Naive thymus-derived CD4-positive, alpha-beta T cell (primary cell): ENCODE measurements at regions of chr11 and their contacts with region 1.

Region 1: DNA sequence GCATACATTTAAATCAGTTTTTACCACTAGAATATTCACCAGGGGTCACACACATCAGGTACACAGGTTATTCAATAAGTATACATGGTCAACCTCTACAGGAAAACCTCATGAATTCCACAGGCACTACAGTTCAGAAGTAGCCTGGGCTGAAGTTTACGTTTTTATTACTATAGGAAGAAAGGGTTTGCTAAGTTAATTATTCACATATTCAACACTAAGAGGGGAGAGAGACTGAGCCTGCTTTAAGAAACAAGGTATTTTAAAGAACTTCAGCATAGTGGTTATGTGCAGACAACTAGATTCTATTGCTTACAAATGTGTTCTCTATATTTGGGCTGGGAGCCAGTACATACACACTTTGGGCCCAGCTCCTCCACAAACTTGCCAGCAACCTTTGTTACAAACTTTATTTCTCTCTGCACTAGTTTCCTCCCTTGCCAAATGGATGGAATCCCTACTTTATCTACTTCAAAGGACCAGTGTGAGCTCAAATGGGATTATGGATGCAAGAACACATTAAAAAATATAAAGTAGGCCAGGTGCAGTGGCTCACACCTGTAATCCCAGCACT is 31.9 kb downstream of the IL18BP start:
- DNase-seq: no peak
- ATAC-seq: no peak
- H3K4me3 ChIP-seq: no peak overlapping the region
- H3K4me3 Mint-ChIP-seq: peak overlapping the region in 8 of 10 donors; percentile 18 to 57 (median 34)
- H3K27ac ChIP-seq: peak overlapping the region; percentile 65
- H3K27ac Mint-ChIP-seq: peak overlapping the region in 8 of 9 donors; percentile 45 to 92 (median 70)
- H3K4me1 ChIP-seq: peaks cover 9 to 28% of the 10 kb centered on the region in 2 donors
- H3K4me1 Mint-ChIP-seq: peaks cover 25 to 80% (median 72%) of the 10 kb centered on the region in 7 donors
- H3K27me3 ChIP-seq: no peaks in the 10 kb centered on the region
- H3K27me3 Mint-ChIP-seq: no peaks in the 10 kb centered on the region

Region 2: GRCh38 chr11:71977743-71978418 is 52.7 kb before region 1 on chr11:
- CTCF ChIA-PET with region 1: interaction called, 3 read pairs
- POLR2A ChIA-PET with region 1: no interaction called
- intact Hi-C with region 1: loop called in 1 of 2 experiments (anchors 5 kb)
- DNase-seq: peak in 6 of 9 donors; percentile 44 to 55 (median 47)
- ATAC-seq: peak; percentile 74
- H3K4me3 ChIP-seq: no peak overlapping the region
- H3K4me3 Mint-ChIP-seq: no peak overlapping the region
- H3K27ac ChIP-seq: no peak overlapping the region
- H3K27ac Mint-ChIP-seq: no peak overlapping the region
- H3K4me1 ChIP-seq: no peaks in the 10 kb centered on the region
- H3K4me1 Mint-ChIP-seq: peaks cover 0 to 7% (median 0%) of the 10 kb centered on the region in 7 donors
- H3K27me3 ChIP-seq: no peaks in the 10 kb centered on the region
- H3K27me3 Mint-ChIP-seq: no peaks in the 10 kb centered on the region

Region 3: DNA sequence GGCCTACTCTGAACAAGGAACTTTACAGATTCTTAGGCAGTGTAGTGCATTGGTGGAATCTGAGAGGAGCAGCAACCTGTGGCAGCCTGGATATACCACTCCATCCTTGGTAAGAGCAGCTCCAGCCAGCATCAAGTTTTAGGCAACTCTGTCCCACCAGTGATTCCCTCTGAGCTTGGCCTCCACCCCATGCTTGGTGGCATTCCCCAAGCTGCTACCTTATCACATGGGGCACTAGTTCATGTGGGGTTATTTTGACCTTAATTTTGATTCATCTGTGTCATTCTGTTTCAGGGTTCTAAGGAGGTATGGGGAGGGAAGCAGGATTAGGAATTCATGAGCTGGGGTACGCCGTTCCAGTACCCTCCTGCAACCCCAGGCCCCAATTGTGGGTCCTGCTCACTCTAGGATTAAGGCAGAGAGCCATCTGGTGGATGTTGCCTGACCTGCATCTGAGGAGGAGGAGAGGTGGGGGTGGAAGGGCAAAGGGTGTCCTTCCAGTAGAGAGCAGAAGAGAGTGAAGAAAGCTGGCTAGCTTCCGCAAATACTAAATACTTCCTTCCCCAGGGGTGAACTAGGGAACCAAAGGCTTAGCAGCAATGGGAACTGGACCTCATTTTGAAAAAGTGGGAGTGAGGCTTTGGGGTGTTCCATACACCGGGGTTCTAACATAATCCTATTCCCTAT is 60.6 kb after region 1 on chr11:
- CTCF ChIA-PET with region 1: interaction called, 143 read pairs
- POLR2A ChIA-PET with region 1: interaction called, 13 read pairs
- intact Hi-C with region 1: loop called (anchors 1 kb)
- DNase-seq: peak; percentile 50 to 79 (median 74)
- ATAC-seq: peak; percentile 99
- H3K4me3 ChIP-seq: no peak overlapping the region
- H3K4me3 Mint-ChIP-seq: no peak overlapping the region
- H3K27ac ChIP-seq: peak overlapping the region; percentile 14
- H3K27ac Mint-ChIP-seq: peak overlapping the region in 8 of 9 donors; percentile 18 to 90 (median 64)
- H3K4me1 ChIP-seq: peaks cover 0 to 3% of the 10 kb centered on the region in 2 donors
- H3K4me1 Mint-ChIP-seq: peaks cover 11 to 18% (median 13%) of the 10 kb centered on the region in 7 donors
- H3K27me3 ChIP-seq: no peaks in the 10 kb centered on the region
- H3K27me3 Mint-ChIP-seq: no peaks in the 10 kb centered on the region

Region 4: DNA sequence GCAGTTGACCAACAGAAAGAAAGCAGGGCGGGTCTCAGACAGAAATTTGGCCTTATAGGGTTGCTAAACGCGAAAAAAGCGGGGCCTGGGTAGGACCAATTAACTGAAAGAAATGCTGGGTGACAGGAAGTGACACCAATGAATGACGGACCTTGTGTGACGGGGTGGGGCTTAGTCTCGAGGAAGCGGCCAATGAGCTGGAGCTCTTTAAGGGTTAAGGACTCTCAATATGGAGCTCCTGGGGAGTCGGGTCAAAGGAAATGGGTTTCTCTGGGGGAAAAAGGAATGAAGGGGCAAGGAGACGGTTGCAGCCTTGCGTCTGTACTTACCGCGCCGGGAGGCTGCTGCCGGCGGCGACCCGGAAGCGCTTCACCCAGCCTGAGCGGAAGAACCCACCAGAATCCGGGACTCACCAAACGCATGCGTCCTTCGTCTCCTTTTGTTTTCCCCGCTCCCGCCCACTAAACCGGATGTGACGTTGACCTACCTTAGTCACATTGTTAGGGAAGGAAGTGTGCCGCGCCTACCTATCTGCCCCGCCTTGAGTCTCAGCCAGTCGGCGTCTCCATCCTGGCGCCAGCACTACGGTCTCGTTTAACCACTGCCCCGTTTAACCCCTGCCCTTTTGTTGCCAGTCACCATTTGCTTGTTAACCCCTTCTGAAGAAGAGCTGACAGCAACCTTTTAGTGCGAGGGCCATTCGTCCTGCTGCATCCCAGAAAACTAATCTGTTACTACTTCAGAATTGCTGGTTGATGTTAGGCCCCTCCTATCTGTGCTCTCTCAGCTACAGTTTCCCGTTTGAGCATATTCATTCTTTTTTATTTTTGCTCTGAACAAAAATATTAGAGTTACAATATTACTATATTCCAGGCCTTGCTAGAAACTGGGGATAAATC is 82.0 kb after region 1 on chr11 and contains the start of gene ANAPC15:
- CTCF ChIA-PET with region 1: interaction called, 3 read pairs
- POLR2A ChIA-PET with region 1: interaction called, 4 read pairs
- intact Hi-C with region 1: loop called in 1 of 2 experiments (anchors 1 kb)
- DNase-seq: peak; percentile 83 to 100 (median 99)
- ATAC-seq: peak; percentile 91
- H3K4me3 ChIP-seq: peak within 1 kb of the TSS; percentile 85
- H3K4me3 Mint-ChIP-seq: peak within 1 kb of the TSS; percentile 73 to 100 (median 96)
- H3K27ac ChIP-seq: peak within 1 kb of the TSS; percentile 92
- H3K27ac Mint-ChIP-seq: peak within 1 kb of the TSS; percentile 97 to 100 (median 98)
- H3K4me1 ChIP-seq: peaks cover 12 to 14% of the 10 kb centered on the region in 2 donors
- H3K4me1 Mint-ChIP-seq: peaks cover 12 to 29% (median 25%) of the 10 kb centered on the region in 7 donors
- H3K27me3 ChIP-seq: no peaks in the 10 kb centered on the region
- H3K27me3 Mint-ChIP-seq: peaks cover 0 to 6% (median 0%) of the 10 kb centered on the region in 5 donors
- total RNA-seq, gene ANAPC15: 43.0 to 59.6 (median 44.1) TPM

Region 5: GRCh38 chr11:72179804-72180396 is 149.3 kb after region 1 on chr11:
- CTCF ChIA-PET with region 1: interaction called, 3 read pairs
- POLR2A ChIA-PET with region 1: no interaction called
- intact Hi-C with region 1: loop called (anchors 1 kb)
- DNase-seq: no peak
- ATAC-seq: no peak
- H3K4me3 ChIP-seq: no peak overlapping the region
- H3K4me3 Mint-ChIP-seq: no peak overlapping the region
- H3K27ac ChIP-seq: no peak overlapping the region
- H3K27ac Mint-ChIP-seq: no peak overlapping the region
- H3K4me1 ChIP-seq: no peaks in the 10 kb centered on the region
- H3K4me1 Mint-ChIP-seq: peaks cover 0 to 5% (median 3%) of the 10 kb centered on the region in 7 donors
- H3K27me3 ChIP-seq: no peaks in the 10 kb centered on the region
- H3K27me3 Mint-ChIP-seq: peaks cover 6 to 24% (median 10%) of the 10 kb centered on the region in 5 donors

Region 6: GRCh38 chr11:72250661-72251465 is 220.3 kb after region 1 on chr11:
- CTCF ChIA-PET with region 1: no interaction called
- POLR2A ChIA-PET with region 1: no interaction called
- intact Hi-C with region 1: no loop called
- DNase-seq: no peak
- ATAC-seq: no peak
- H3K4me3 ChIP-seq: no peak overlapping the region
- H3K4me3 Mint-ChIP-seq: no peak overlapping the region
- H3K27ac ChIP-seq: no peak overlapping the region
- H3K27ac Mint-ChIP-seq: no peak overlapping the region
- H3K4me1 ChIP-seq: no peaks in the 10 kb centered on the region
- H3K4me1 Mint-ChIP-seq: no peaks in the 10 kb centered on the region
- H3K27me3 ChIP-seq: no peaks in the 10 kb centered on the region
- H3K27me3 Mint-ChIP-seq: peaks cover 11 to 26% (median 20%) of the 10 kb centered on the region in 5 donors